CD4-positive, alpha-beta memory T cell (primary cell): ENCODE measurements at regions of chr6 and their contacts with region 1.

Region 1: GRCh38 chr6:52263709-52264540 is 19.6 kb upstream of the IL17F start:
- DNase-seq: peak; percentile 63 to 67 (median 64)
- H3K4me3 ChIP-seq: no peak overlapping the region
- H3K4me3 Mint-ChIP-seq: no peak overlapping the region
- H3K27ac ChIP-seq: no peak overlapping the region
- H3K27ac Mint-ChIP-seq: peak overlapping the region in 5 of 7 donors; percentile 15 to 73 (median 33)
- H3K4me1 ChIP-seq: no peaks in the 10 kb centered on the region
- H3K4me1 Mint-ChIP-seq: peaks cover 3 to 11% (median 6%) of the 10 kb centered on the region in 4 donors
- H3K27me3 ChIP-seq: no peaks in the 10 kb centered on the region
- H3K27me3 Mint-ChIP-seq: no peaks in the 10 kb centered on the region

Region 2: DNA sequence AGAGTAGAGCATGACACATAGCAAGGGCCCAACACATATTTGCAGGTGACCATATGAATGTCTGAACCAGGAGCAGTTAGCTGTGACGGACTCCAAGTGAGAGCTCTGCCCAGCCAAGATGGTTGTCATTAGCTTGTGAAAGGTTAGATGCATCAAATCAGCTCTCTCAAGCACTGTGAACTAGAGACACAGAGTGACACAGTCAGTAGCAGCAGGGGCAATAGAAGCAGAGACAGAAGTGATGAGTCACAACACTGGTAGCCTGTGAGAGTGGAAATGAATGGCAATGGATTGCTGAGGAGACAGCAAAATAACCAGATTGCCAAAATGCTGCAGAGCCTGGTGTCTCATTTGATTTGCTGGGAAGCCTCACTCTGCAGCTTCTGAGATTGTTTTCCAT is 735.4 kb before region 1 on chr6:
- CTCF ChIA-PET with region 1: no interaction called
- POLR2A ChIA-PET with region 1: no interaction called
- intact Hi-C with region 1: no loop called
- DNase-seq: no peak
- H3K4me3 ChIP-seq: no peak overlapping the region
- H3K4me3 Mint-ChIP-seq: no peak overlapping the region
- H3K27ac ChIP-seq: no peak overlapping the region
- H3K27ac Mint-ChIP-seq: no peak overlapping the region
- H3K4me1 ChIP-seq: no peaks in the 10 kb centered on the region
- H3K4me1 Mint-ChIP-seq: no peaks in the 10 kb centered on the region
- H3K27me3 ChIP-seq: no peaks in the 10 kb centered on the region
- H3K27me3 Mint-ChIP-seq: no peaks in the 10 kb centered on the region

Region 3: GRCh38 chr6:51855310-51856082 is 408.4 kb before region 1 on chr6:
- CTCF ChIA-PET with region 1: no interaction called
- POLR2A ChIA-PET with region 1: no interaction called
- intact Hi-C with region 1: loop called (anchors 10 kb)
- DNase-seq: peak in 4 of 5 donors; percentile 12 to 19 (median 17)
- H3K4me3 ChIP-seq: no peak overlapping the region
- H3K4me3 Mint-ChIP-seq: no peak overlapping the region
- H3K27ac ChIP-seq: no peak overlapping the region
- H3K27ac Mint-ChIP-seq: peak overlapping the region in 1 of 7 donors; percentile 5
- H3K4me1 ChIP-seq: no peaks in the 10 kb centered on the region
- H3K4me1 Mint-ChIP-seq: no peaks in the 10 kb centered on the region
- H3K27me3 ChIP-seq: no peaks in the 10 kb centered on the region
- H3K27me3 Mint-ChIP-seq: peaks cover 5 to 8% of the 10 kb centered on the region in 2 donors

Region 4: GRCh38 chr6:51885957-51886356 is 378.0 kb before region 1 on chr6:
- CTCF ChIA-PET with region 1: no interaction called
- POLR2A ChIA-PET with region 1: no interaction called
- intact Hi-C with region 1: no loop called
- DNase-seq: no peak
- H3K4me3 ChIP-seq: no peak overlapping the region
- H3K4me3 Mint-ChIP-seq: no peak overlapping the region
- H3K27ac ChIP-seq: no peak overlapping the region
- H3K27ac Mint-ChIP-seq: no peak overlapping the region
- H3K4me1 ChIP-seq: no peaks in the 10 kb centered on the region
- H3K4me1 Mint-ChIP-seq: no peaks in the 10 kb centered on the region
- H3K27me3 ChIP-seq: no peaks in the 10 kb centered on the region
- H3K27me3 Mint-ChIP-seq: peaks cover 0 to 4% of the 10 kb centered on the region in 2 donors

Region 5: GRCh38 chr6:52063584-52064344 is 200.2 kb before region 1 on chr6:
- CTCF ChIA-PET with region 1: interaction called, 50 read pairs
- POLR2A ChIA-PET with region 1: interaction called, 4 read pairs
- intact Hi-C with region 1: no loop called
- DNase-seq: peak; percentile 59 to 68 (median 60)
- H3K4me3 ChIP-seq: peak overlapping the region in 1 of 2 donors; percentile 36
- H3K4me3 Mint-ChIP-seq: peak overlapping the region; percentile 80 to 92 (median 86)
- H3K27ac ChIP-seq: no peak overlapping the region
- H3K27ac Mint-ChIP-seq: peak overlapping the region; percentile 30 to 96 (median 80)
- H3K4me1 ChIP-seq: peaks cover 14% of the 10 kb centered on the region
- H3K4me1 Mint-ChIP-seq: peaks cover 11 to 14% (median 12%) of the 10 kb centered on the region in 4 donors
- H3K27me3 ChIP-seq: no peaks in the 10 kb centered on the region
- H3K27me3 Mint-ChIP-seq: peaks cover 0 to 2% of the 10 kb centered on the region in 2 donors

Region 6: GRCh38 chr6:52162940-52163908 is 100.7 kb before region 1 on chr6:
- CTCF ChIA-PET with region 1: interaction called, 22 read pairs
- POLR2A ChIA-PET with region 1: no interaction called
- intact Hi-C with region 1: no loop called
- DNase-seq: peak in 4 of 5 donors; percentile 22 to 33 (median 28)
- H3K4me3 ChIP-seq: no peak overlapping the region
- H3K4me3 Mint-ChIP-seq: no peak overlapping the region
- H3K27ac ChIP-seq: no peak overlapping the region
- H3K27ac Mint-ChIP-seq: no peak overlapping the region
- H3K4me1 ChIP-seq: no peaks in the 10 kb centered on the region
- H3K4me1 Mint-ChIP-seq: no peaks in the 10 kb centered on the region
- H3K27me3 ChIP-seq: no peaks in the 10 kb centered on the region
- H3K27me3 Mint-ChIP-seq: peaks cover under 1 to 13% of the 10 kb centered on the region in 2 donors

Region 7: GRCh38 chr6:52243282-52243893 is 20.5 kb before region 1 on chr6:
- CTCF ChIA-PET with region 1: interaction called, 11 read pairs
- POLR2A ChIA-PET with region 1: no interaction called
- intact Hi-C with region 1: no loop called
- DNase-seq: no peak
- H3K4me3 ChIP-seq: no peak overlapping the region
- H3K4me3 Mint-ChIP-seq: no peak overlapping the region
- H3K27ac ChIP-seq: no peak overlapping the region
- H3K27ac Mint-ChIP-seq: no peak overlapping the region
- H3K4me1 ChIP-seq: no peaks in the 10 kb centered on the region
- H3K4me1 Mint-ChIP-seq: peaks cover 0 to 4% (median 1%) of the 10 kb centered on the region in 4 donors
- H3K27me3 ChIP-seq: no peaks in the 10 kb centered on the region
- H3K27me3 Mint-ChIP-seq: peaks cover 0 to 8% of the 10 kb centered on the region in 2 donors

Region 8: GRCh38 chr6:52333840-52334200 is 69.9 kb after region 1 on chr6:
- CTCF ChIA-PET with region 1: no interaction called
- POLR2A ChIA-PET with region 1: no interaction called
- intact Hi-C with region 1: no loop called
- DNase-seq: peak in 4 of 5 donors; percentile 48 to 69 (median 59)
- H3K4me3 ChIP-seq: no peak overlapping the region
- H3K4me3 Mint-ChIP-seq: peak overlapping the region; percentile 46 to 85 (median 71)
- H3K27ac ChIP-seq: peak overlapping the region; percentile 50
- H3K27ac Mint-ChIP-seq: peak overlapping the region; percentile 68 to 97 (median 94)
- H3K4me1 ChIP-seq: peaks cover 65% of the 10 kb centered on the region
- H3K4me1 Mint-ChIP-seq: peaks cover 42 to 72% (median 56%) of the 10 kb centered on the region in 4 donors
- H3K27me3 ChIP-seq: no peaks in the 10 kb centered on the region
- H3K27me3 Mint-ChIP-seq: no peaks in the 10 kb centered on the region

Region 9: DNA sequence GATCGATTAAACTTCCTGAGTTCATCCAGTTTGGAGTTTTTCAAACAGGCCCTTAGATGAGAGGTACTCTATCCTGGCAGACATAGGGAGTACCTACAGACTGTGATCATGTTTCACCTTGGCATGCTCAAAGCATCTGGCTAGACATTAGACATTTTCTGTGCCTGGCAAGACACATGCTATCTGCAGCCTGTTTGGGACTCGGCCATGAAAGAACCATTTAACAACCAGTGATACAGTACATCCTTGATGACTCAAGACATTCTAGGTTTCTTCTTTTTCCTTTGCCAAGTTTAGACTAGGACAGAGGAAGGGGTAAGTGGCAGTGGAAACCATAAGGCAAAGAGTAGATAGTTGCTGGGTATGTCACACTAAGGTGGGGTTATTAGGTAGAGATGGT is 82.6 kb after region 1 on chr6:
- CTCF ChIA-PET with region 1: no interaction called
- POLR2A ChIA-PET with region 1: no interaction called
- intact Hi-C with region 1: no loop called
- DNase-seq: no peak
- H3K4me3 ChIP-seq: no peak overlapping the region
- H3K4me3 Mint-ChIP-seq: no peak overlapping the region
- H3K27ac ChIP-seq: no peak overlapping the region
- H3K27ac Mint-ChIP-seq: no peak overlapping the region
- H3K4me1 ChIP-seq: peaks cover 9% of the 10 kb centered on the region
- H3K4me1 Mint-ChIP-seq: peaks cover 12 to 21% (median 17%) of the 10 kb centered on the region in 4 donors
- H3K27me3 ChIP-seq: no peaks in the 10 kb centered on the region
- H3K27me3 Mint-ChIP-seq: no peaks in the 10 kb centered on the region

Region 10: DNA sequence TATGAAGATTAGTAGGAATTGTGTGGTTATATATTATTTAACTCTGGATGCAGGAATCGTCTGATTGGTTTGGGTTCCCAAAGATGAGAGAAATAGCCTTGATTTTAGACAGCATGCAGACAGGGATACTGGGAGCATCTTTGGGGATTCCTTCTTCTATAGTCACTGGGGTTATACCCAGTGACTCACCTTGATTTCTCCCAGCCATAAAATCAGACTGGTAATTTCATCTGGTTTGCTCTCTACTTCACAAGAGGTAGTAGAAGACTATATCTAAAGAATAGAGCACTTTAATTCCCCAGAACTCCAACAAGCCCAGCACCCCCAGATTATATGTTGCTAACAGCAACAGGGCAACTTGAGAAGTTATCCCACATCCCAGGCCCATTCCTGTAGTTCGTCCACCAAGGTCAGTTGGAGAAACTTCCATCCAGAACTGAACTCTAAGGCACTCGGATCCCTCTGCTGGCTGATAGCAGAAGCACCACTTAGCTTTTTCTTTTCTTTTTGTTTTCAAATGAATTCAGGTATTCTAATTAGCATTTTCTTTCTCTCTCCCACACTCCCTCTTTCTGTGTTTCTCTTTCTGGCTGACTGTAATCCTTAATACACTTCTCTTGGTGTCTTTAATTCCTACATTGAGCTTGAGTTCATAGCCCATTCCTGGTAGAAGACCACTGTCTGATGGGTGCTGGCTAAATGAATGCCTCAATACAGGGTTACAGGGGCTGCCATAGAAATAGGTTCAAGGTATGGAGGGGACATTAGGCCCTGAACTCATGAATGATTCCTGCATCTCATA is 135.8 kb after region 1 on chr6:
- CTCF ChIA-PET with region 1: interaction called, 24 read pairs
- POLR2A ChIA-PET with region 1: no interaction called
- intact Hi-C with region 1: no loop called
- DNase-seq: peak; percentile 36 to 53 (median 47)
- H3K4me3 ChIP-seq: no peak overlapping the region
- H3K4me3 Mint-ChIP-seq: peak overlapping the region in 7 of 8 donors; percentile 32 to 82 (median 63)
- H3K27ac ChIP-seq: peak overlapping the region; percentile 67
- H3K27ac Mint-ChIP-seq: peak overlapping the region; percentile 95 to 99 (median 96)
- H3K4me1 ChIP-seq: peaks cover 68% of the 10 kb centered on the region
- H3K4me1 Mint-ChIP-seq: peaks cover 51 to 84% (median 60%) of the 10 kb centered on the region in 4 donors
- H3K27me3 ChIP-seq: no peaks in the 10 kb centered on the region
- H3K27me3 Mint-ChIP-seq: no peaks in the 10 kb centered on the region

Region 11: DNA sequence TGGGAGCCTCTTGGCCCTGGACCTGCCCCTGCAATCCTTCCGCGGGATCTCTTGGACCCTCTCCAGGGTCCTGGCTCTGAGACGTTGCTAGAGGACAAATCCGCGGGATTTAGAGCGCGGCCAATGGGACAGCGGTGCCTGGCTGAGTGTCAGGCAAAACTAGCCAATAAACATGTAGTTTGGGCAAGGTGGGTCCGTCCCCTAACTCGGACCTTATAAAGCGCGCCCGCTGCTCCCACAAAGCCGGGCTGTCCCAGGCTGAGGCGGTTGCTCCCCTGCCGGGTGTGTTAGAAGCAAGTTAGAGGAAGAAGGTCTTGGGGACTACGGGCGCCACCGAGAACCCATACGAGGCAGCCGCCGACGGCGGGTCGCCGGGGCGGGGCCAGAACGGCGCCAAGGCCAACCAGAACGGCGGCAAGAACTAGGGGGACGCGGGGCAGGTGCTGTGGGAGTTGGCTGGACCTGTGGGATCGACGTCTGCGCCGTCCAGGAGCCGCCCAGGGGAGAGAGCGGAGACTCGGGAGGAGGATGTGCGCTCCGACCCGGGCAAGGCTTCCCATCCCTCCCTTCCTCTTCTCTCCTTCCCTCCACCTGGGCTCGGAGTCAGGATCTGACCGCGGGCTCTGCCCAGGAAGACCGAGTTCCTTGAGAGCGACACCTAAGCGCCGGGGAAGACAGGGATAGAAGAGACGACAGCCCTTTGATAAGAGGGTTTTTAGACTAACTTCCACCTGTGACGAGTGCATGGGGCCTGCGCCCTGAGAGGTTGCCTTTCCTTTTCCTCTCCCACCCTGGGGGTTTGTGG is 400.5 kb after region 1 on chr6:
- CTCF ChIA-PET with region 1: interaction called, 3 read pairs
- POLR2A ChIA-PET with region 1: no interaction called
- intact Hi-C with region 1: loop called (anchors 1 kb)
- DNase-seq: peak; percentile 37 to 56 (median 44)
- H3K4me3 ChIP-seq: peak overlapping the region; percentile 48 to 66
- H3K4me3 Mint-ChIP-seq: no peak overlapping the region
- H3K27ac ChIP-seq: peak overlapping the region; percentile 2
- H3K27ac Mint-ChIP-seq: no peak overlapping the region
- H3K4me1 ChIP-seq: peaks cover 13% of the 10 kb centered on the region
- H3K4me1 Mint-ChIP-seq: peaks cover 0 to 1% (median 0%) of the 10 kb centered on the region in 4 donors
- H3K27me3 ChIP-seq: no peaks in the 10 kb centered on the region
- H3K27me3 Mint-ChIP-seq: peaks cover 1 to 2% of the 10 kb centered on the region in 2 donors